ENCODE measurements at regions of chr18 and their contacts with region 1.

Region 1: DNA sequence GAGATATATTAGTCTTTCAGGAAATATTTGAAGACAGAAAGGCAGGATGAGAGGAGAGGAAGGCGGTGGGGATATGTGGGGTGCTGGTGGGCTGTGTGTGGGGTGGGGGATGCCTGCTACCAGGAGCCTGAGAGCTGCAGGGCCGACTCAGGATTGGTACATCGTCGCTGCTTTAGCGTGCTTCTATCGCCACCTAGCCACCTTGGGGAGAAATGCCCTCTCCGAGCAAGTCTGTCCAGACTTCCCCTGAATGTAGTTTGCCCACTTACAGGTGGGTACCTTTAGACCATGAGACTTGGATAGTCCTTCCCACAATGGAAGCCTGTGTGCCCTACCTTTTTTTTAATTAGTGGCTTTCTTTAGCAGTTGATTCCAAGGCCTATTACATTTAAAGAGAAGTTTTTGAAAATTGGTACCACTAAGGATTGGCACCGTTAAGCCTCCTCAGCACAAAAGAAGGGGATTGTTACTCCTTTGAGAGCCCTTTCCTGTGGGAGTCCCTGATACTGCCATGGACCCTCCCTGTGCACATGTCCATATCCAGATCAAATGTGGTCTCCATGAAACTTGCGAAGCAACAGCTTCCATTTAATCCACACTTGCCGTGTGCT is 114.1 kb upstream of the NDUFV2 start:
- DNase-seq: peak; percentile 4 to 73 (median 58)
- ATAC-seq: peak; percentile 71
- H3K4me3 ChIP-seq: no peak overlapping the region
- H3K4me3 Mint-ChIP-seq: no peak overlapping the region
- H3K27ac ChIP-seq: no peak overlapping the region
- H3K27ac Mint-ChIP-seq: no peak overlapping the region
- H3K4me1 ChIP-seq: no peaks in the 10 kb centered on the region
- H3K4me1 Mint-ChIP-seq: no peaks in the 10 kb centered on the region
- H3K27me3 ChIP-seq: no peaks in the 10 kb centered on the region
- H3K27me3 Mint-ChIP-seq: peaks cover 20% of the 10 kb centered on the region
- CTCF ChIP-seq: peak; percentile 87

Region 2: GRCh38 chr18:8478166-8478967 is 510.0 kb before region 1 on chr18:
- CTCF ChIA-PET with region 1: interaction called, 7 read pairs
- POLR2A ChIA-PET with region 1: no interaction called
- intact Hi-C with region 1: loop called in 1 of 2 experiments (anchors 5 kb)
- DNase-seq: peak; percentile 5 to 54 (median 38)
- ATAC-seq: peak; percentile 31
- H3K4me3 ChIP-seq: no peak overlapping the region
- H3K4me3 Mint-ChIP-seq: no peak overlapping the region
- H3K27ac ChIP-seq: no peak overlapping the region
- H3K27ac Mint-ChIP-seq: no peak overlapping the region
- H3K4me1 ChIP-seq: no peaks in the 10 kb centered on the region
- H3K4me1 Mint-ChIP-seq: no peaks in the 10 kb centered on the region
- H3K27me3 ChIP-seq: no peaks in the 10 kb centered on the region
- H3K27me3 Mint-ChIP-seq: peaks cover 9% of the 10 kb centered on the region
- CTCF ChIP-seq: peak; percentile 54

Region 3: DNA sequence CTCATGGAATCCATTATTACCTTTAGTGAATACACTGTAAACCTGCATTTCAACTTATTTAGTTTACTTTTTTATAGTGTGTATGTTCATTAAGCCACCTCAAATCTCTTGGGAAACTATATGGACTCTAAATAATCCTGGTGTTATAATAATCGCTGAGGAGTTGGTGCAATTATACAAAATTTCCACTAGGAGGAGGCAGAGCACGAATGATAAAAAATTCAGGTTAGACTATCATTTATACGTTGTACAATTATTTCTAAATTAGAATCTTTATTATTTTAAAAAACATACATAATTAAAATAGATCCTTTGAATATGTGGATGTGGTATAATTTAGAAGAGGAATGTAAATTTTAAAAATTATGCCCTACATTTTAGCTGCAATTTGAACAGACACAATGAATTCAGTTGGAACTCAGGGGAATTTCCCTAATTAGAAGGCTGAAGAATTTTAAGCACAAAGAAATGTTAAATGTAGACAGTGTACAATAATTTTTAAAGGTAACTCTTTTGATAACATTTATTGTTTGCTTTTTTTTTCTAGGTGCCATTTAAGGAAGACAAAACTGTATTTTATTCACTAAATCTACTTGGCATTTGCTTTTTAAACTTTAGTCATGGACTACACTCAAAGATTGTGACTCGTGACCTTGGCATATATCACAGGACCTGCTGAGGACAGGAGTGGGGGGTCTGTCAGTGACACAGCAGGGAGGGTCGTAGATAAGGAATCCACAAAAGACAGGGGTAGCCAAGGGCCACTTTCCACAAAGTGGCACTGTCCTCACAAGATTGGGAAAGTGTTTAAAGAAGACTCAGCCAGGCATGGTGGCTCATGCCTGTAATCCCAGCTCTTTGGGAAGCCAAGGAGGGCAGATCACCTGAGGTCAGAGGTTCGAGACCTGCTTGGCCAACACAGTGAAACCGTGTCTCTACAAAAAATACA is 333.6 kb before region 1 on chr18:
- CTCF ChIA-PET with region 1: interaction called, 85 read pairs
- POLR2A ChIA-PET with region 1: interaction called, 3 read pairs
- intact Hi-C with region 1: loop called (anchors 1 kb)
- DNase-seq: peak in 2 of 9 experiments; percentile 26 to 41
- ATAC-seq: no peak
- H3K4me3 ChIP-seq: no peak overlapping the region
- H3K4me3 Mint-ChIP-seq: no peak overlapping the region
- H3K27ac ChIP-seq: no peak overlapping the region
- H3K27ac Mint-ChIP-seq: no peak overlapping the region
- H3K4me1 ChIP-seq: no peaks in the 10 kb centered on the region
- H3K4me1 Mint-ChIP-seq: no peaks in the 10 kb centered on the region
- H3K27me3 ChIP-seq: no peaks in the 10 kb centered on the region
- H3K27me3 Mint-ChIP-seq: peaks cover 5% of the 10 kb centered on the region
- CTCF ChIP-seq: peak; percentile 98

Region 4: DNA sequence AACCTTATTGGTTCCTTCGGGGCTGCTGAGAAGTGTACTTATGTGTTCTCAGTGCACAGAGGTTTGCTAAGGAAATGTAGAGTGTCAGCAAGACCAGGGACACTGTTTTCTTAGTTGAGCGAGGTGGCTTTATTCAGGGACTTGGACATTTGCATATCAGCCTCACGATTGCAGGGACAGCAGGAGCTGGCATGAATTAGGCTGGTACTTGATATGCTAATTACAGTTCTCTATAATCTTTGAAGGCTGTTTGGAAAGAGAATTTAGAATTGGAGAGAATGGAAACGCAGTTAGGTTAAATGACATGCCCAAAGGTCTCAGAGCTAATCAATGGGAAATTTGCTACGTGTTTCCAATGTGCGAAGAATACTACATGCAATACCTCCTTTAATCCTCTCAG is 301.8 kb before region 1 on chr18:
- CTCF ChIA-PET with region 1: interaction called, 14 read pairs
- POLR2A ChIA-PET with region 1: no interaction called
- intact Hi-C with region 1: no loop called
- DNase-seq: no peak
- ATAC-seq: no peak
- H3K4me3 ChIP-seq: no peak overlapping the region
- H3K4me3 Mint-ChIP-seq: no peak overlapping the region
- H3K27ac ChIP-seq: no peak overlapping the region
- H3K27ac Mint-ChIP-seq: no peak overlapping the region
- H3K4me1 ChIP-seq: no peaks in the 10 kb centered on the region
- H3K4me1 Mint-ChIP-seq: no peaks in the 10 kb centered on the region
- H3K27me3 ChIP-seq: no peaks in the 10 kb centered on the region
- H3K27me3 Mint-ChIP-seq: peaks cover 2% of the 10 kb centered on the region
- CTCF ChIP-seq: no peak

Region 5: GRCh38 chr18:8696749-8697211 is 291.6 kb before region 1 on chr18:
- CTCF ChIA-PET with region 1: interaction called, 93 read pairs
- POLR2A ChIA-PET with region 1: interaction called, 4 read pairs
- intact Hi-C with region 1: loop called in 1 of 2 experiments (anchors 1 kb)
- DNase-seq: peak; percentile 53 to 87 (median 73)
- ATAC-seq: peak; percentile 97
- H3K4me3 ChIP-seq: no peak overlapping the region
- H3K4me3 Mint-ChIP-seq: no peak overlapping the region
- H3K27ac ChIP-seq: no peak overlapping the region
- H3K27ac Mint-ChIP-seq: no peak overlapping the region
- H3K4me1 ChIP-seq: no peaks in the 10 kb centered on the region
- H3K4me1 Mint-ChIP-seq: no peaks in the 10 kb centered on the region
- H3K27me3 ChIP-seq: peaks cover 5 to 7% of the 10 kb centered on the region in 2 experiments
- H3K27me3 Mint-ChIP-seq: peaks cover 20% of the 10 kb centered on the region
- CTCF ChIP-seq: peak; percentile 95

Region 6: GRCh38 chr18:8835521-8835953 is 152.8 kb before region 1 on chr18:
- CTCF ChIA-PET with region 1: no interaction called
- POLR2A ChIA-PET with region 1: no interaction called
- intact Hi-C with region 1: no loop called
- DNase-seq: no peak
- ATAC-seq: no peak
- H3K4me3 ChIP-seq: no peak overlapping the region
- H3K4me3 Mint-ChIP-seq: no peak overlapping the region
- H3K27ac ChIP-seq: no peak overlapping the region
- H3K27ac Mint-ChIP-seq: no peak overlapping the region
- H3K4me1 ChIP-seq: no peaks in the 10 kb centered on the region
- H3K4me1 Mint-ChIP-seq: no peaks in the 10 kb centered on the region
- H3K27me3 ChIP-seq: no peaks in the 10 kb centered on the region
- H3K27me3 Mint-ChIP-seq: no peaks in the 10 kb centered on the region
- CTCF ChIP-seq: no peak

Region 7: DNA sequence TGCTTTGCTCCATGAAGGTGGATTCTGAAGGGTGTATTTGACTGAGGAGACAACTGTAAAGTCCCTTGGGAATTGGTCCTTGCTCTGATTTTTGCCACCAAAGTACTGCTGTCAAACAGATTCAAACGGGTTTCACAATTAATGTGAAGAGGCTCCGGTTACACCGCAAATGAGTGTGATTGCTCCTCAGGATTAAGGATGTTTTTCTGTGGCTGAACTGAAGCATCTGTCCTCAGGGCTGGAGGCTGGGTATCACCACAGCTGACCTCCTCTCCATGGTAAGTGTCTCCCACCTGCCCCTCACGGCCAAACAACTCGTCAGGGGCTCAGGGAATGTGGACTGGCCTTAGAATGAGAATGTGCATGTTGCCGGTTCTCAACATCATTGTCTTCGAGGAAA is 16.2 kb before region 1 on chr18:
- CTCF ChIA-PET with region 1: no interaction called
- POLR2A ChIA-PET with region 1: no interaction called
- intact Hi-C with region 1: no loop called
- DNase-seq: no peak
- ATAC-seq: no peak
- H3K4me3 ChIP-seq: no peak overlapping the region
- H3K4me3 Mint-ChIP-seq: no peak overlapping the region
- H3K27ac ChIP-seq: no peak overlapping the region
- H3K27ac Mint-ChIP-seq: no peak overlapping the region
- H3K4me1 ChIP-seq: no peaks in the 10 kb centered on the region
- H3K4me1 Mint-ChIP-seq: no peaks in the 10 kb centered on the region
- H3K27me3 ChIP-seq: no peaks in the 10 kb centered on the region
- H3K27me3 Mint-ChIP-seq: peaks cover 5% of the 10 kb centered on the region
- CTCF ChIP-seq: no peak

Region 8: DNA sequence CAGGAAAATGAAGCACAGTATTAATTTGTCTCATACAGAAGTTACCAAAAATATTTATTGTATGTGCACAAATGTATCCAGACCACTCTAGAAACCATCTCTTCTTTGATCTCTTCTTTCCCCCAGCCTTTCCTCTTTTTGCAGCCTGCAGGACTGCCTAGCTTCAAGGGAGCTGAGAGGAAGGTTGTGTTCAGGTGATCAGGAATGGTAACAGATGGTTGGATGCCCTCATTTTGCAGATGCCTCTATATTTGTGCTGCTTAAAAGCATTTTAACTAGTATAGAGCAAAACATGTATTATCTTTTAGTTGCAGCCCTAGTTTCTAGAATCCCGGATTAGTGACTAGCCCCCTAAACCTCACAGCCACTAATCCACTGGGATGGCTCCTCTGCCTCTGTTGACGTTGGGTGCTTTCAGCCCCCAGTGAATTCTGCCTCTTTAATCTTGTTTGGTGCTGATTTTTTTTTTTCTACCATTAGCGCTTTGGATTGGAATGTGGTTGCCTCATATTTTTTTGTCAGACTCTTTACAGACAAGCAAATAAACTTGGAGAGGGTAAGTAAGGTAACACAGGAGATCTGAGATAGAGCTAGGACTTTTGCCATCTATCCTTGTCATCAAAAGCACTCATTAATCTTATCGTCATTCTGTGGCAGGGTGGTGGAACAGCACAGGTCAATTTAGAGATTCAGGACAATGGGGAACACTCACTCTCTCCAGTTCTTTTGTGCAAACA is 10.3 kb after region 1 on chr18:
- CTCF ChIA-PET with region 1: interaction called, 14 read pairs
- POLR2A ChIA-PET with region 1: no interaction called
- intact Hi-C with region 1: no loop called
- DNase-seq: no peak
- ATAC-seq: no peak
- H3K4me3 ChIP-seq: no peak overlapping the region
- H3K4me3 Mint-ChIP-seq: no peak overlapping the region
- H3K27ac ChIP-seq: no peak overlapping the region
- H3K27ac Mint-ChIP-seq: no peak overlapping the region
- H3K4me1 ChIP-seq: no peaks in the 10 kb centered on the region
- H3K4me1 Mint-ChIP-seq: no peaks in the 10 kb centered on the region
- H3K27me3 ChIP-seq: no peaks in the 10 kb centered on the region
- H3K27me3 Mint-ChIP-seq: peaks cover 29% of the 10 kb centered on the region
- CTCF ChIP-seq: no peak